ENCODE measurements at regions of chr12 and their contacts with region 1.

Region 1: GRCh38 chr12:85036241-85036707 is at the starts of genes LRRIQ1 and TSPAN19:
- DNase-seq: peak; percentile 86
- H3K4me3 ChIP-seq: peak within 1 kb of the TSS; percentile 62
- CTCF ChIP-seq: no peak

Region 2: DNA sequence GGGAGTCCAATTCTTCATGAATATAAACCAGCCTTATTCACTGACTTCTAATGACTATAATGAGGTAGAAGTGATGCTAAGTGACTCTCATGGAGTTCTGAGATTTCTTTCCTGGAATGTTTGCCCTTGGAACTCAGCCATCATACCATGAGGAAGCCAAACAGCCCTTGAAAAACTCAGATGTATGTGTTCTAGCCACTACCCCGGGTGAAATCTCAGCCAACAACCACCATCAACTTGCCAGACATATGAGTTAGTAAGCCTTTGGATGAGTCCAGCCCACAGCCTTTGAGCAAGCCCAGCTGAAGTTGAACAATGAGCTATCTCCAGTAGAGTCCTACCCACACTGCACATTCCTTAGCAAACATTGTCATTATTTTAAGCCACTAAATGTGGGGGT is 273.2 kb before region 1 on chr12:
- in situ Hi-C with region 1: no loop called
- DNase-seq: peak; percentile 84
- H3K4me3 ChIP-seq: no peak overlapping the region
- CTCF ChIP-seq: no peak

Region 3: GRCh38 chr12:84874125-84874824 is 162.0 kb before region 1 on chr12:
- in situ Hi-C with region 1: loop called (anchors 10 kb)
- DNase-seq: peak; percentile 53
- H3K4me3 ChIP-seq: no peak overlapping the region
- CTCF ChIP-seq: peak; percentile 50

Measured in astrocyte of the cerebellum (primary cell).